ENCODE measurements at regions of chr1 and their contacts with region 1.

Region 1: GRCh38 chr1:244861683-244862082 is 2.7 kb downstream of the HNRNPU start:
- DNase-seq: no peak
- ATAC-seq: no peak
- H3K4me3 ChIP-seq: peak overlapping the region in 3 of 4 donors; percentile 96 to 99 (median 98)
- H3K27ac ChIP-seq: peak overlapping the region in 2 of 4 donors; percentile 99 to 100
- H3K4me1 ChIP-seq: peaks cover 19 to 40% (median 26%) of the 10 kb centered on the region in 3 donors
- H3K27me3 ChIP-seq: no peaks in the 10 kb centered on the region
- CTCF ChIP-seq: no peak

Region 2: DNA sequence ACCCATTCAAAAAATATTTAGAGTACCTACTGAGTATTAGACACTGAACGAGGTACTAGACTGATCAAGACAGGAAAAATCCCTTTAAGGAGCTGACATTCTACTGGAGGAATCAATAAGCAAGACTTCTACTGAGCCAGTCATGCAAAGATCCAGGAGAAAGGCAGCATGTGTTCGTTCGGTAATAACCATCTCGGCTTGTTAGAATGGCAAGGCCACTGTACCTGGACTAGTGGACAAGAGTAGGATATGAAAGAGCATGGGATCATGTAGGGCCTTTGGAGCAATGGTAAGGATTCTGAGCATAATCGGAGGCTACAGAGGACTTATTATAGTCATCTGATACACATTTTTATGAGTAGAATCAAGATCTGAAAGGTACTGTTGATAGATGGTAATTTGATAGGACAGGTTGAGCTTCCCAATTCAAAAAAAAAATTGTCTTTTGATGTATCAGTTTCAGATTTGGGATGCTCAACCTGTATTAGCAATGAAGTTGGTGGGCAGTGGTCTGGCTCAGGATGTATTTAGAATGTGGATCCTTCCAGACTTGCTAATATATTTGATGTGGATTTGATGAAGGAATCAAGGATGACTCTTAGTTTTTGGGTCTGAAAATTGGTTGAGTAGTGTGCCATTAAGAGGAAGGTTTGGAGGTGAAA is 24.0 kb before region 1 on chr1:
- intact Hi-C with region 1: loop called in 1 of 3 experiments (anchors 2 kb)
- DNase-seq: no peak
- ATAC-seq: no peak
- H3K4me3 ChIP-seq: no peak overlapping the region
- H3K27ac ChIP-seq: peak overlapping the region in 1 of 4 donors; percentile 30
- H3K4me1 ChIP-seq: peaks cover 0 to 23% (median 22%) of the 10 kb centered on the region in 3 donors
- H3K27me3 ChIP-seq: no peaks in the 10 kb centered on the region
- CTCF ChIP-seq: no peak